Activated CD8-positive, alpha-beta memory T cell treated with anti-CD3 and anti-CD28 coated beads, Interleukin-2, amount 10 ng/mL, durations not matched to agents 7 days and 5 days (primary cell): ENCODE measurements at regions of chr11 and their contacts with region 1.

Region 1: DNA sequence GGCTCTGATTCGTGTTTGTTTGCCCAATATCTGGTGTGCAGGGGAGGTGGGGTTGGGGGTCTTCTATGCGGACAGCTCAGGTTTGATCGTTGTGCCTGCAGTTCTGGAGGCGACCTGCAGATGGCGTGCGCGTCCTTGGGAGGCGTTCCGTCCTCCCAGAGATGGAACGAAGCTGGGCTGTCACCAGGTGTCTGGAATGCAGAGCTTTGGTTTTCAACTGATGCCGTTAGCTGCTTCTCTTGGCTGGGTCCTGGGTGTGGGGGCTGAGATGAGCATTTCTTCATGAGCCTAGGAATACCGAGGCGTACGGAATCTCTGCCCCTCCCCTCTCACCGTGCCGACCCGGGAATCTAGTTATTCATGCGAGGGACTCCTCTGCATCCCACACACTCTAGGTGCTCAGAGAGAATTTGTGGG is 98.6 kb downstream of the CEP164 start:
- DNase-seq: peak; percentile 78
- ATAC-seq: peak; percentile 71
- H3K4me3 Mint-ChIP-seq: no peak overlapping the region
- H3K27ac Mint-ChIP-seq: no peak overlapping the region
- H3K4me1 Mint-ChIP-seq: peaks cover 8% of the 10 kb centered on the region
- H3K27me3 Mint-ChIP-seq: peaks cover 3% of the 10 kb centered on the region

Region 2: DNA sequence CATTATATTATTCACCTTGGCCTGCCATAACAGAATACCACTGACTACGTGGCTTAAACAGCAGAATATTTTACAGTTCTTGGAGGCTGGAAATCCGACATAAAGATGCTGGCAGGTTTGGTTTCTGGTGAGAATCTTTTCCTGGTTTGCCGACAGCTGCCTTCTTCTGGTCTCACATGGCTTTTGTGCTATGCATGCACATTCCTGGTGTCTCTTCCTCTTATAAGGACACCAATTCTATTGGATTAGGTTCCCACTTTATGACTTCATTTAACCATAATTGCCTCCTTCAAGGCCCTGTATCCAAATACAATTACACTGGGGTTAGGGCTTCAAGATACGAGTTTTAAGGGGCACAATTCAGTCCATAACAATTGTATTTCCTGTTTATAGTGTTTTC is 176.7 kb before region 1 on chr11:
- CTCF ChIA-PET with region 1: no interaction called
- DNase-seq: no peak
- ATAC-seq: no peak
- H3K4me3 Mint-ChIP-seq: no peak overlapping the region
- H3K27ac Mint-ChIP-seq: no peak overlapping the region
- H3K4me1 Mint-ChIP-seq: peaks cover 3% of the 10 kb centered on the region
- H3K27me3 Mint-ChIP-seq: no peaks in the 10 kb centered on the region

Region 3: DNA sequence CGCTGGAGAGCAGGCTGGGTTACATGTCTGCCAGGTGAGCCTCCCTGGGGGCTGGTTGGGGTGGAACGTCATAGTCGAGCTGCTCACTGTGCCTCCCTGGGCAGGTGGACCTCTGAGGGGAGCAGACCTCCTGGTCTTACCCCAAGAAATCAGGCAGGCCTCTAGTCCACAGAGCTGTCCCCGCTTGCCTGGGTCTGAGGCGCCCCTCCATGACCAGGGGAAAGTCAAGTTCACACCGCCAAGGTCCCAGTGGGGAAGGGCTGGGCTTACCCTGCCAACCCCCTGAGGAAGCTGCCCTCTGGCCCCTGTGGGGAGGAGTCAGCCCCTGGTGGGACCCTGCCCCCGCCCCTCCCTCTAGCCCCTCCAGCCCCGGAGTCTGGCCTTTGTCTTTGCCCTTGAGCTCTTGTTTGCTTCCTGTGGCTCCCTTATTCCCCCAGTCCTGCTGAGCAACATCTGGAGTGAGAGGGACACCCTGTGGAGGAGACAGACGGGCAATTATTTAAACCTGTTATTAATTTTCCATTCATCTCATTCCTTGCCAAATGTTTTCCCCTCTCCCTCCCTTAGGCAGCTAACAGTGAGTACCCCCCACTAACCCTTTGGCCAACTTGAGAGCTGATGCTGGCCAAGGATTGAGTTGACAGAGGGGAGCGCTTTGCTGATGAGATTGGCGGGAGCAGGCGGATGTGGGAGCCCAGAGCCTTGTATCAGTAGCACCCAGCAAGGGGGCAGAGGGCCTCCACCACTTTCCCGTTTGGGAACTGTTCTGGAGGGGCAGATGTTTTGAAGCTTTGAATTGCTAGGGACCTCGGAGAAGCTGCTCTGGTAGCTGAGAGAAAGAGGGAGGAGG is 15.2 kb before region 1 on chr11:
- CTCF ChIA-PET with region 1: interaction called, 37 read pairs
- DNase-seq: no peak
- ATAC-seq: no peak
- H3K4me3 Mint-ChIP-seq: no peak overlapping the region
- H3K27ac Mint-ChIP-seq: no peak overlapping the region
- H3K4me1 Mint-ChIP-seq: no peaks in the 10 kb centered on the region
- H3K27me3 Mint-ChIP-seq: no peaks in the 10 kb centered on the region

Region 4: DNA sequence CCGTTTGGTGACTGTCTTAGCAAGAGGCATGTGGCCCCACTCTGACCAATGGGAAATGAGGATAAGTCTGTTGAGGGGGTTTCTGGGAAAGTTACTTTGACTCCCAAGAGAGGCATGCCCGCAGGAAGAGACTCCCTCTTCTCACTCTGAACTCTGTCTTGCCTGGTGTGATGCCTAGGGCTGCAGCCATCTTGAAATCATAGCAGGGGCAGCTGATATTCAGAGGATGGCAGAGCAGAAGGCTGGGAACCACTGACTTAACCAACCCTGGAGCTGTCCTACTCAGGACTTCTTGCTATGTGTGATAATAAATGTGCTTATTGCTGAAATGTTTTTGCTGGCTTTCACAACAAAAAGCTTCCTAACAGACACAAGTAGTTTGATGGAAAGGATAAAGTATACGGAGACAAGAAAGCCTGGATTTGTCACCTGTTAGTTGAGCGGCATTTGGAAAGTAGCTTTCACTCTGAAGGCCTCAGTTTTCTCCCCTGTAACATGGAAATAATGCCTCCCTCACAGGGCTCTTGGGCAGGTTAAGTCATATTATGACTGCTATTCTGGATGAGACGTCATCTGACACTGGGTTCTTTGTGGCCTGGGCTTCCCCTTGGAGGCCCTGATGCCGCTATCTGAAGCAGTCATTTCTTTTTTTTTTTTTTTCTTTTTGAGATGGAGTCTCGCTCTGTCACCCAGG is 29.9 kb after region 1 on chr11:
- CTCF ChIA-PET with region 1: interaction called, 11 read pairs
- DNase-seq: peak; percentile 72
- ATAC-seq: peak; percentile 90
- H3K4me3 Mint-ChIP-seq: no peak overlapping the region
- H3K27ac Mint-ChIP-seq: no peak overlapping the region
- H3K4me1 Mint-ChIP-seq: peaks cover 15% of the 10 kb centered on the region
- H3K27me3 Mint-ChIP-seq: peaks cover 3% of the 10 kb centered on the region

Region 5: DNA sequence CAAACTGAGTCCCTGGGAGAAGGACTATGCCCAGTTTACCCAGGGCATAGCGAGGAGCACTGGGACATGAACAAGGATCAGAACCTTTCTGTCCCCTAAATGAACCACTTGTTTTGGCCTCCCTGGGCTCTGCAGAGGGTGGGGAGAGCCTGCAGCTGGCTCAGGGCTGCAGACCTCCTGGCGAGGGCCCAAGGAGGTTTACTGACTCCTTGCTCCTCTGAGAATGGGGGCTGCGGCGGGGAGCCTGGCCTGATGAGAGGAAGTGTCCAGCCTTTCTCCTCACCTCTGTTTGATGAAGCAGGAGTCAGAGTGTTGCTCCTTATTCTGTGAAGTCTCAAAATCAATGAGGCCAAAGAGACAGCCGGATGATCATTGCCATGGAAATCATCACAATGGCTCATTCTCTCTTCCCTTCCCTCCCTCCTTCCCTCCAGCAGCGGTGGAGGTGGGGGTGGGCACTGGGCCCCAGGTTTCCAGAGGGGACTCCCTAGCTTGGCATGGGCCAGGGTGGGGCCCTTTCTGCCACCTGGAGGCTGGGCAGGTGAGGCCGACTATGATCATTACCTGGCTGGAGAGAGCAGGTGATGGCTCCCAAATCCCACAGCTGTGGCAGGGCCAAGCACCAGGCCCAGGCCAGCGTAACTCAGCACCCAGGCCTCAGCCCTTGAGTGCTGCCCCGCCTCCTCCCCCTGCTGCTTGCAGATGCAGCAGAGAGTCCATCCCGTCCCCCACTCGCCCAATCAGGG is 71.1 kb after region 1 on chr11:
- CTCF ChIA-PET with region 1: no interaction called
- DNase-seq: no peak
- ATAC-seq: no peak
- H3K4me3 Mint-ChIP-seq: no peak overlapping the region
- H3K27ac Mint-ChIP-seq: no peak overlapping the region
- H3K4me1 Mint-ChIP-seq: no peaks in the 10 kb centered on the region
- H3K27me3 Mint-ChIP-seq: peaks cover 6% of the 10 kb centered on the region

Region 6: DNA sequence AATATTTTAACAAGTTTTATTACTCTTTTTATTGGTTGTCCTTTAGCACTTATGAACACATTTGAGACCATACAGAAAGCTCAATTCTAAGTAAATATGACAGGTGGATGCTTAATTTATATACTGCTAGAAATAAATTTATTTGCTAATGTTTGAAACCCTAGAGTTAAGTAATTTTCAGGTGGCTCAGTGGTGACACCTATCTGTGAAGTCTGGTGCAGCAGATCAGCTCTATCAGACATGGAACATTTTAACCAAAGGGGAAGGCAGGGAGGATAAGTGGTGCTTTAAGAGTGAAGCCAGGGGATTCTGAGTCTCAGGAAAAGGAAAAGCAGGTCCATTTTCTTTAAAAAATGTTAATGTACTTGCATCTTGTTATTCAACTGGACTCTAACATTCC is 194.9 kb after region 1 on chr11:
- CTCF ChIA-PET with region 1: interaction called, 45 read pairs
- DNase-seq: no peak
- ATAC-seq: no peak
- H3K4me3 Mint-ChIP-seq: no peak overlapping the region
- H3K27ac Mint-ChIP-seq: no peak overlapping the region
- H3K4me1 Mint-ChIP-seq: no peaks in the 10 kb centered on the region
- H3K27me3 Mint-ChIP-seq: peaks cover 13% of the 10 kb centered on the region

Region 7: GRCh38 chr11:117796872-117797529 is 370.7 kb after region 1 on chr11 and contains the start of gene DSCAML1:
- CTCF ChIA-PET with region 1: interaction called, 13 read pairs
- DNase-seq: no peak
- ATAC-seq: peak; percentile 89
- H3K4me3 Mint-ChIP-seq: no peak within 1 kb of the TSS
- H3K27ac Mint-ChIP-seq: no peak within 1 kb of the TSS
- H3K4me1 Mint-ChIP-seq: peaks cover 4% of the 10 kb centered on the region
- H3K27me3 Mint-ChIP-seq: peaks cover 68% of the 10 kb centered on the region
- total RNA-seq, gene DSCAML1: 0.42 to 1.4 TPM

Region 8: DNA sequence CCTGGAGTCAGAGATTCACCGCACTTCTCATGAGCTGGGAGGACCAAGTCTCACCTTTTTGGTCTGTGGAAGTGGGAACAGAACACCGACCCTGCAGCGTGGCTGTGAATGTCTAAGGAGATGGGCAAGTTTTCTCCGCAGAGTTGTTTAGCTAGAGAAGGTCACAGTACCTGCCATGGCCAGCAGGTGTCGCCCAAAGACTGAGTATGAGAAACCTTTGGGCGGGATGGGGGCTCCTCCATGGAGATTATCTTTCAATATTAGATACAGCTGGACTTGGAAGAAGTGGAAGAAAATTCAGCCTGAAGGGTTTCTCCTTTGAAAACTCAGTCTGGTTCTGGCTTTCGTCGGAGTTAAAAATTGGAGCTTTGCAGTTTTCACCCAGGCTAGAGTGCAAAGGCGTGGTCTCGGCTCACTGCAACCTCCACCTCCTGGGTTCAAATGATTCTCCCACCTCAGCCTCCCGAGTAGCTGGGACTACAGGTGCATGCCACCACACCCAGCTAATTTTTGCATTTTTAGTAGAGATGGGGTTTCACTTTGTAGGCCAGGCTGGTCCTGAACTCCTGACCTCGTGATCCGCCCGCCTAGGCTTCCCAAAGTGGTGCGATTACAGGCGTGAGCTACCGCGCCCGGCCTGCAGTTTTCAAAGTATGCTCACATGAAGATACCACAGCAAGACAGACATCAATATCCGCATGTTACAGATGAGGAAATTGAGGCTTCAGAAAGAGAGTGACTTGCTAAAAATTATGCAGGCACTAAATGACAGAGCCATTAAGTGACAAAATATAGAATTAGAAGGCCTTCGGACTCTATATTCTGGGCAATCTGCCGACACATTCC is 381.4 kb after region 1 on chr11:
- CTCF ChIA-PET with region 1: interaction called, 23 read pairs
- DNase-seq: peak; percentile 85
- ATAC-seq: peak; percentile 70
- H3K4me3 Mint-ChIP-seq: no peak overlapping the region
- H3K27ac Mint-ChIP-seq: no peak overlapping the region
- H3K4me1 Mint-ChIP-seq: peaks cover 22% of the 10 kb centered on the region
- H3K27me3 Mint-ChIP-seq: peaks cover 2% of the 10 kb centered on the region